Mucosa of descending colon (tissue), 3 donors: ENCODE measurements at regions of chr5 and their contacts with region 1.

Region 1: GRCh38 chr5:71782771-71783770 is 64.0 kb downstream of the CARTPT start:
- DNase-seq: peak; percentile 58 to 87 (median 78)
- ATAC-seq: peak; percentile 87
- H3K4me3 ChIP-seq: no peak overlapping the region
- H3K4me1 ChIP-seq: no peaks in the 10 kb centered on the region
- CTCF ChIP-seq: peak; percentile 38

Region 2: GRCh38 chr5:71569748-71570509 is 213.1 kb before region 1 on chr5:
- intact Hi-C with region 1: no loop called
- DNase-seq: no peak
- ATAC-seq: no peak
- H3K4me3 ChIP-seq: no peak overlapping the region
- H3K4me1 ChIP-seq: no peaks in the 10 kb centered on the region
- CTCF ChIP-seq: no peak

Region 3: DNA sequence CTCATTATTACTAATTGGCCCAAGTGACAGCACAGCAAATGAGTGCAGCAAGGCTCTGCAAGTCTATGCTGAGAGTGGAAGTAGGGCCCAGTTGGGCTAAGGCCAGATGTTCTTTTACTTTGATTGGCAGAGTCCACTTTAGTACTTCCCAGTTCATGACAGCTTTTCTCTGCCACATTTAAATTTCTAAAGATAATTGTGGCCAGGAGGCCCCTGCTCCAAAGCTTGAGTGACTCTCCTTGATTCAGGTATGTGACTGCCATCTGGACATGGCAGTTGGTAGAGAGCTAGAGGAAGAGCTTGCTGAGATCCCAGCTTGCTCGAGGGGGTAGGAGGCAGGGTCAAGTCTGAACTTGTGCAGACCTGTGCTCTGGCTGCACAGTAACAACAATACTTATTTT is 90.1 kb after region 1 on chr5:
- intact Hi-C with region 1: no loop called
- DNase-seq: no peak
- ATAC-seq: no peak
- H3K4me3 ChIP-seq: no peak overlapping the region
- H3K4me1 ChIP-seq: no peaks in the 10 kb centered on the region
- CTCF ChIP-seq: no peak

Region 4: DNA sequence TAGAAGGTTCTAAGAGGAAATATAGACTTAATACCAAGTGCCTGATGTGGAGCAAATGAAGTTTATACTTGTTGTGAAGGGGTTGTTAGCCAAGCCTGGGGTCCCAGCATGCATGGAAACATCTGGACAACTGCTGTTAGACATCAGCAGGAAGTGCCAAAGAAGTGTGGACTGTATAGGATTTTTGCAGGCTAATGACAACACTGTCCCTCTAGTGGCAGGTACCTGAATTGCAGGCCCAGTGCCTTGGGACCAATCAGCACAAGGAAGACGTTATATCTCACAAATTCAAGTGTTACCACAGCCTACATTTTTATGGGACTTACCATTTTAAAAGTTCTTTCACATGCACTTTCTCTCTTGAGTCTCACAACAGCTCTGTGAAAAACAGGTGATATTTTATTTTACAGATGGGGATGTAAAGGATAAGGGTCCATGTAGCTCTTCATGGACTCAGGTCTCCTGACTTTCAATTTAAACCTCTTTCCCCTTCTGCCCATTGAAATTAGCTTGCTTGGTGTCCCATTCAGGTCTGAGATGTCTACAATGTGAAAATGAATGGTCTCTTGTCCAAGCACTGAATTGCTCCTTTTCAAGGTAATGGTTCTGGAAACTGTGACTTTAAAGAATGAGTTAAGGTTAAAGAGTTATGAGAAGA is 235.2 kb after region 1 on chr5:
- intact Hi-C with region 1: loop called in 1 of 2 experiments (anchors 5 kb)
- DNase-seq: peak in 2 of 3 donors; percentile 73 to 89
- ATAC-seq: peak; percentile 90
- H3K4me3 ChIP-seq: no peak overlapping the region
- H3K4me1 ChIP-seq: no peaks in the 10 kb centered on the region
- CTCF ChIP-seq: peak; percentile 93

Region 5: DNA sequence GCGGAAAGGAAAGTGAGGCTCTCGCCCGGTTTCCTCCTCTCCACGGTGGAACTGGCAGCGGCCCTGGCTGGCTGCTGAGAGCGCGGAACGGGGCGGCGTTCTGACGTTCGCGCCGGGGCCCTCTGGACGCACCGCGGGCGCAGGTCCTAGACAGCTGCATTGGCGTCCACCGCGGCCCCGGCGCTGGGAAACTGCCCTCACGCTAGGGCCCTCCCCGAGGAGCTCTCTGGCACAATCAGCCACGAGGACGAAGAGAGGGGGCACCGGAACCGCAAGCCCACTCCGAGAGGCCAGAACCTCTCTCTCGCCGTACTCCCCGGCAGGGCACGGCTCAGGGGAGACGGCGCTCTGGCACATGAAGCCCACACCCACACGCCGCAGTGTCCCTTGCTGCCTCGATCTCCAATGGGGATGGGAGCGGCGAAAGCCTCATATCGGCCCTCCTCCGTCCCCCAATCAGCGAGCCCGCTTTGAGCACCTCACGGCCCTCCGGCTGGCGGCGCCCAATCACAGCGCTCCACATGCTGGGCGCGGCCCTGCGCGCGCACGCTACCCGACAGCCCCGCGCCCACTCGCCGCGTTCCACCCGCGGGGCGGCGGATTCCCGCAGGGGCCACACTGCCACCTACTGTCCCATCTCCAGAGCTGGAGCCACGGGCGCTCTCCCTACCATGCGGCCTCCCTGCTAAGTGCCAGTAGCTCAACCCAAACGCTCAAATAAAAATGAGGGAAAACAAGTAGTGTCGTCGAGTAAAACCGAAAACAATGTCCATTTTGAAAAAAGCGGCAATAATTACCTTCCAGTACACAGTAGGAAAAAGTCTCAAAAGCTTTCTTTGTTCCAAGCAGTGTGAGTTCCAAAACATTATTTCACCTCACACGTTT is 525.1 kb after region 1 on chr5:
- intact Hi-C with region 1: loop called (anchors 10 kb)
- DNase-seq: peak; percentile 97 to 98 (median 98)
- ATAC-seq: peak; percentile 98
- H3K4me3 ChIP-seq: peak overlapping the region; percentile 37
- H3K4me1 ChIP-seq: peaks cover 8% of the 10 kb centered on the region
- CTCF ChIP-seq: peak; percentile 90